ENCODE measurements at regions of chr19 and their contacts with region 1.

Region 1: DNA sequence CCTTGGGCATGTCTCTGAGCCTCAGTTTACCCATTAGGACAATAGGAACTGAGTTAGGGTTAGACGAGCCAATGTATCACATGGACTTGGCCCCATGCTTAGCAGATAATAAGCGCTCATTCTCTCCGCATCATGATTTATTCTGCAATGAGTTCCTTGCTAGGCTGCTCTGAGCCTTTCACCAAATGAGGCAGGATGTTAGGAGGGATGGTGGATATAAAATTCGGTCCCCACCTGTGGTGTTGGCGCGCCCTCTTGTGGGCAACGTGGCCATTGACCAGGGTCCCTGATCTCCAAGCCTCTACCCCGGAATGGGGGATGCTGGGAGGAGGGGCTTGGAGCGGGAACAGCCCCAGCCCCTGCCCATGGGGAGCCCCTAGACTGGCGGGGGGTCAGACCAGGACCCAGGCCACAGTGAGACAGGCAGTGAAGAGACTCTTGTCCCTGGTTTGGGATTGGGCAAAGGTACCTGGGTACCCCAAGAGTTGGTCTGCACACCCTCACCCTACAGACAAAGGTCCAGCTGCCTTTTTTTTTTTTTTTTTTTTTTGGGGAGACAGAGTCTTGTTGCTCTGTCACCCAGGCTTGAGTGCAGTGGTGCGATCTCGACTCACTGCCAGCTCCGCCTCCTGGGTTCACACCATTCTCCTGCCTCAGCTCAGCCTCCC is 43.9 kb downstream of the CERS4 start:
- DNase-seq: peak; percentile 92
- CTCF ChIP-seq: peak; percentile 90

Region 2: GRCh38 chr19:8028951-8029491 is 224.0 kb before region 1 on chr19:
- in situ Hi-C with region 1: no loop called
- DNase-seq: no peak
- CTCF ChIP-seq: no peak

Region 3: DNA sequence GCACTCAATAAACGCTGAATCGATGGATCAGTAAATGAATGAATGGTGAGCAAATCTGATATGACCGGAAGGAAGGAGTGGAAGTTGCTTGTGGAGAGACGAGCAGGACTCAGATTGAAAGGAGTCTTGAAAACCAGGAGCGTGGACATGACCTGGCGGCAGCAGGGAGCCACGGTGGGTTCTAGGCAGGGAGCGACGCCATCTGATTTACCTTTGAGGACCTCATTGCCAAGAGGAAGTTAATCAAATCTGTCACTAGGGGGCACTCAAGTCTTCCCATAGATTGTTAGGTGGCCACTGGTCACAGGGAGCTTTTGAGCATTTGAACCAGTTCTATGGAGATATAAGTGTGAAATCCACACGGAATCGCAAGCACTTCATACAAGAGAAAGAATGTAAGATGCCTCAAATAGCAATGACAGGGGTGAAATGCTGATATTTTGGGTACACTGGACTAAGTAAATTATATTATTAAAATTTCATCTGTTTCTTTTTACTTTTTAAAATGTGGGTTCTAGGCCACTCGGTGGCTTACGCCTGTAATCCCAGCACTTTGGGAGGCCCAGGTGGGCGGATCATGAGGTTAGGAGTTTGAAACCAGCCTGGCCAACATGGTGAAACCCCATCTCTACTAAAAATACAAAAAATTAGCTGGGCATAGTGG is 94.5 kb before region 1 on chr19:
- in situ Hi-C with region 1: loop called (anchors 10 kb)
- DNase-seq: peak; percentile 82
- CTCF ChIP-seq: peak; percentile 63

Region 4: GRCh38 chr19:8363803-8364771 is 111.0 kb after region 1 on chr19 and contains the start of gene ANGPTL4:
- in situ Hi-C with region 1: no loop called
- DNase-seq: peak; percentile 78
- CTCF ChIP-seq: no peak

Measured in GM13976 (cell line).